ENCODE measurements at regions of chr1 and their contacts with region 1.

Region 1: DNA sequence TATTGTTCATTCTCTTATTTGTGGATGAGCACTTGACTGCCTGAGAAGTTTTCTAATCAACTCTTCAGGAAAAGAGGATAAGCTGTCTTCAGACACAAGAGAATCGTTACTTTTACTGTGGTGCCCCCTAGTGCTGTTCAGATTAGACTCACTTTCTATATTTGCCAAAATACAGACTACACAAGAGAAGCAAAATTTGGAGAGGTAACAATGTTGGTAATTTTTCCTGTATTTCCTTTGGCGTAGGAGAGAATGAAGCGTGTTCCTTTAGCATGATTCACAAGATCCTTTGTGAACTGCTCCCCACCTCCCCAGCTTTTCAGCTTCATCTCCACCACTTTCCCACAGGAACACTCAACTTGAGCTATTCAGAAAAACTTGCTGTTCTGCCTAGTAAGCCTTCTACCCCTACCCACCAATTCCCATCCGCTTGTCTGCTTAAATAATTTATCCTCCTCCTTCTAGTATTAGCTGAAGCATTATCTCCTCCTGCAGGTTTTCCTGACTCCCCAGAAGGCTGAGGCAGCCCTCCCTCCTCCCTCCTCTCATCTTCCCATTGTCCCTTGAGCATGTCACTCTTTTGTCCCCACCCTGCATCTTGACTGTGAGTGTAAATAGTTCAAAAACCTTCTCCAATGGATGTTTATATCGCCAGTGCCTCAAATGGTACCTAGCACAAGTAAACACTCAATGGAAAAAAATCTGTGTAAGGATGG is 4.5 kb downstream of the TNFSF4 start:
- DNase-seq: no peak
- H3K4me3 ChIP-seq: no peak overlapping the region
- H3K27ac ChIP-seq: no peak overlapping the region
- H3K4me1 ChIP-seq: peaks cover 0 to 4% (median 0%) of the 10 kb centered on the region in 4 experiments; a peak in 1 of 7 replicates
- H3K27me3 ChIP-seq: peaks cover 0 to 1% (median under 1%) of the 10 kb centered on the region in 4 experiments; a peak in 4 of 7 replicates
- CTCF ChIP-seq: peak in 2 of 3 experiments; percentile 56 to 61; a peak in 2 of 4 replicates
- EP300 ChIP-seq: no peak
- POLR2A ChIP-seq: no peak
- RAD21 ChIP-seq: peak; percentile 88 to 89

Region 2: GRCh38 chr1:172753964-172754363 is 448.6 kb before region 1 on chr1:
- CTCF ChIA-PET with region 1: interaction called, 15 read pairs
- POLR2A ChIA-PET with region 1: no interaction called
- DNase-seq: no peak
- H3K4me3 ChIP-seq: no peak overlapping the region
- H3K27ac ChIP-seq: no peak overlapping the region
- H3K4me1 ChIP-seq: no peaks in the 10 kb centered on the region
- H3K27me3 ChIP-seq: no peaks in the 10 kb centered on the region
- CTCF ChIP-seq: no peak
- EP300 ChIP-seq: no peak
- POLR2A ChIP-seq: no peak
- RAD21 ChIP-seq: no peak

Region 3: DNA sequence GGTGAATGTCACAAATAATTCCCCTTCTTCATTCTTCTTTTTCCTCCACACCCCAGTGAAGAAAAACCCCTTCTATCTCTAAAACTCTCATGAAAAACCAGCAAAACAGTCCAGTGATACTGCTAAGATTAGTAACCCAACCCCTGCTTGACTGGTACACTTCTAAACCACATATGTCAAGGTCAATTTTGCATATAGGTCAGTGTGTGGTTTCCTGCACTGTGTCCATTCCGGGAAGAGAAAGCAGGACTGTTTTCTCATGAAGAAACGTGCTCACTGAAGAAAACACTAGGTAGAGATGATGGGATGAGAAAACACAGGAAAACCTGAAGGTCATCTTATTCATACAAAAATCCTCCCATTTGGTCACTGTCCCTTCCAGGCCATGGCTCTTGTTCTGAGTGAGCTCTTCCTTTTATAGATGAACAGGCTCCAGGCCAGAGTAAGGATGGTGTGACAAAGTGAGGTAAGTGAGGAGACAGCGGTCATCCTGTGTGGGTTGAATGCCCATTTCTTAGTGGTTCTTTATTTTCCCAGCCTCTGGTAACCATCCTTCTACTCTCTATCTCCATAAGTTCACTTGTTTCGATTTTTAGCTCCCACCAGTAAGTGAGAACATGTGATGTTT is 421.0 kb before region 1 on chr1:
- CTCF ChIA-PET with region 1: interaction called, 12 read pairs
- POLR2A ChIA-PET with region 1: no interaction called
- DNase-seq: no peak
- H3K4me3 ChIP-seq: no peak overlapping the region
- H3K27ac ChIP-seq: no peak overlapping the region
- H3K4me1 ChIP-seq: no peaks in the 10 kb centered on the region; a peak in 1 of 7 replicates
- H3K27me3 ChIP-seq: peaks cover 0 to 1% (median 0%) of the 10 kb centered on the region in 4 experiments; a peak in 1 of 7 replicates
- CTCF ChIP-seq: no peak
- EP300 ChIP-seq: no peak
- POLR2A ChIP-seq: no peak
- RAD21 ChIP-seq: no peak

Region 4: DNA sequence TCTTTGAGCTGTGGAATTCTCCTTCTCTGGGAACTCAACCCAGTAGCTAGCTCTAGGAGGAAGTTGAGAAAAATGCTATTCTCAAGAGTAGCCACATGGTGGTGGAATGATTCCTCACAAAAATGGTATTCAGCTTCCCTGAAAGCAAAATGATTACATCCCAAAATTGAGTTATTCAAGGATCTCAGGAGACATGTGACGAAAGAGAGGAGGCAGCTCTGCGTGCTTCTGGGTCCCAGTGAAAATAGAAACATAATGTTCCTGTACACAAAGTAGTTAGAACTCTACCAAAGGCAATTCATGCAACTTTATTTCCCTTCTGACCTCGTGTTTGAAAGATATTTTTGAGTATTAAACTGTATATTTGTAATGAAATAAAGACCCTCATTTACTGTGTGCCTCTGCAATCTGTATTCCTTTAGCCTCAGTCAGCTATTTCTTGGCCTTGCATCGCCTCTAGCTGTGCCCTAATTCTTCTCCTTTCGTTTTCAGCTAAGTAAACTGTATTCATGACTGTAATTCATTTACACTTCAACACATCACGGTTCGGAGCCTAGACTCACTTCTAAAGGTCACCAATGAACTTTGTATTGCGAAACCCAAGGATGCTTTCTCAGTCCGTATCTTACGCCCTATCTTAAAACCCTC is 376.4 kb before region 1 on chr1:
- CTCF ChIA-PET with region 1: interaction called, 150 read pairs
- POLR2A ChIA-PET with region 1: no interaction called
- DNase-seq: no peak
- H3K4me3 ChIP-seq: no peak overlapping the region
- H3K27ac ChIP-seq: no peak overlapping the region
- H3K4me1 ChIP-seq: peaks cover 0 to 2% (median 0%) of the 10 kb centered on the region in 4 experiments; a peak in 1 of 7 replicates
- H3K27me3 ChIP-seq: no peaks in the 10 kb centered on the region
- CTCF ChIP-seq: peak in 2 of 3 experiments; percentile 53 to 58; a peak in 2 of 4 replicates
- EP300 ChIP-seq: no peak
- POLR2A ChIP-seq: no peak
- RAD21 ChIP-seq: peak; percentile 85 to 88

Region 5: GRCh38 chr1:173190101-173190906 is 12.3 kb before region 1 on chr1:
- CTCF ChIA-PET with region 1: interaction called, 16 read pairs
- POLR2A ChIA-PET with region 1: no interaction called
- DNase-seq: no peak
- H3K4me3 ChIP-seq: no peak overlapping the region
- H3K27ac ChIP-seq: no peak overlapping the region
- H3K4me1 ChIP-seq: no peaks in the 10 kb centered on the region
- H3K27me3 ChIP-seq: no peaks in the 10 kb centered on the region
- CTCF ChIP-seq: no peak
- EP300 ChIP-seq: no peak
- POLR2A ChIP-seq: no peak
- RAD21 ChIP-seq: no peak

Region 6: DNA sequence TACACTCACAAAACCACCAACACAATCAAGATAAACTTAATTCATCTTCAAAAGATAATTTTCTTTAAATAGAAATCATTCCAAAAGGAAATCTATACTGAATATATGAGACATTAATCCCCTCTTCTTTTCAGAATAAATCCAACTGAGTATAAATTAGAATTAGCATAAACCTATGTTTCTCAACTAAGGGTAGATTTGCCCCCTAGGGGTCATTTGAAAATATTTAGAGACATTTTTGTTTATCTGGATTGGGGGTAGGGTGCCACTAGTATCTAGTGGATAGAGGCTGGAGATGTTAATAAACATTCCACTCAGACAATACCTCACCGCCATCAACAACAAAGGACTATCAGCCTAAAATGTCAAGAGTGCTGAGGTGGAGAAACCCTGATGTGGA is 11.1 kb after region 1 on chr1:
- CTCF ChIA-PET with region 1: interaction called, 48 read pairs
- POLR2A ChIA-PET with region 1: no interaction called
- DNase-seq: no peak
- H3K4me3 ChIP-seq: no peak overlapping the region
- H3K27ac ChIP-seq: no peak overlapping the region
- H3K4me1 ChIP-seq: peaks cover 0 to 2% (median 2%) of the 10 kb centered on the region in 4 experiments; a peak in 4 of 7 replicates
- H3K27me3 ChIP-seq: peaks cover 4 to 33% (median 20%) of the 10 kb centered on the region in 4 experiments
- CTCF ChIP-seq: no peak
- EP300 ChIP-seq: no peak
- POLR2A ChIP-seq: no peak
- RAD21 ChIP-seq: no peak

Region 7: DNA sequence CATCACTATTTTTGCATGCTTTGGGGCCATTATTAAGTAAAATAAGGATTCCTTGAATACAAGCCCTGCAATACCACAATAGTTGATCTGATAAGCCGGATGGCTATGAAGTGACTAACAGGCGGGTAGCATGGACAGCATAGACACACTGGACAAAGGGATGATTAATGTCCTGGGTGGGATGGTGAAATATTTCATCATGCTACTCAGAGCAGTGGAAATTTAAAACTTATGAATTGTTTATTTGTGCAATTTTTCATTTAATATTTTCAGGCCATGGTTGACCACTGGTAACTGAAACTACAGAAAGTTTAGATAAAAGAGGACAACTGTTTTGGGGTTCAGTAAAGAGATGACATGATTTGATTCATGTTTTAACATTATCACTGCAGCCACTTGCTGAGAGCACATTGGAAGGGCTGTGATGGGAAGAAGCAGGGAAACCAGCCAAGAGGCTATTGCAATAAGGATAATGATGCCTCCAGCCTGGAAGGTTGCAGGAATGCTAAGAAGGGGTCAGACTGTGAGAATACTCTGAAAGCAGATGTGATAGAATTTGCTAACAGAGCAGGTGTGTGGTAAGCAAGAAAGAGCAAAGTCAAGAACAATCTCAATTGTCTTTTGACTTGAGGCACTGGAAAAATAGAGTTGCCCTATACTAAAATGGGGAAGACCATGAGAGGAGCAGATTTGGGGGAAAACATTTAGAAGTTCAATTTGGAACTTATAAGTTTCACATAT is 67.1 kb after region 1 on chr1:
- CTCF ChIA-PET with region 1: no interaction called
- POLR2A ChIA-PET with region 1: no interaction called
- DNase-seq: no peak
- H3K4me3 ChIP-seq: no peak overlapping the region
- H3K27ac ChIP-seq: no peak overlapping the region
- H3K4me1 ChIP-seq: no peaks in the 10 kb centered on the region
- H3K27me3 ChIP-seq: no peaks in the 10 kb centered on the region
- CTCF ChIP-seq: no peak
- EP300 ChIP-seq: no peak
- POLR2A ChIP-seq: no peak
- RAD21 ChIP-seq: no peak